Ascending aorta (tissue), 2 donors: ENCODE measurements at regions of chr2 and their contacts with region 1.

Region 1: GRCh38 chr2:218395797-218396687 is 3.6 kb upstream of the CTDSP1 start:
- DNase-seq: peak; percentile 70 to 96
- H3K4me3 ChIP-seq: peak overlapping the region; percentile 79 to 99
- H3K27ac ChIP-seq: peak overlapping the region; percentile 98
- H3K4me1 ChIP-seq: peaks cover 0 to 9% of the 10 kb centered on the region in 2 donors
- H3K27me3 ChIP-seq: no peaks in the 10 kb centered on the region
- CTCF ChIP-seq: peak; percentile 88 to 98 (median 97)

Region 2: GRCh38 chr2:218186355-218186766 is 209.7 kb before region 1 on chr2:
- intact Hi-C with region 1: loop called (anchors 1 kb)
- DNase-seq: peak in 1 of 2 donors; percentile 81
- H3K4me3 ChIP-seq: no peak overlapping the region
- H3K27ac ChIP-seq: no peak overlapping the region
- H3K4me1 ChIP-seq: peaks cover 0 to 6% of the 10 kb centered on the region in 2 donors
- H3K27me3 ChIP-seq: no peaks in the 10 kb centered on the region
- CTCF ChIP-seq: peak; percentile 69 to 89 (median 83)

Region 3: DNA sequence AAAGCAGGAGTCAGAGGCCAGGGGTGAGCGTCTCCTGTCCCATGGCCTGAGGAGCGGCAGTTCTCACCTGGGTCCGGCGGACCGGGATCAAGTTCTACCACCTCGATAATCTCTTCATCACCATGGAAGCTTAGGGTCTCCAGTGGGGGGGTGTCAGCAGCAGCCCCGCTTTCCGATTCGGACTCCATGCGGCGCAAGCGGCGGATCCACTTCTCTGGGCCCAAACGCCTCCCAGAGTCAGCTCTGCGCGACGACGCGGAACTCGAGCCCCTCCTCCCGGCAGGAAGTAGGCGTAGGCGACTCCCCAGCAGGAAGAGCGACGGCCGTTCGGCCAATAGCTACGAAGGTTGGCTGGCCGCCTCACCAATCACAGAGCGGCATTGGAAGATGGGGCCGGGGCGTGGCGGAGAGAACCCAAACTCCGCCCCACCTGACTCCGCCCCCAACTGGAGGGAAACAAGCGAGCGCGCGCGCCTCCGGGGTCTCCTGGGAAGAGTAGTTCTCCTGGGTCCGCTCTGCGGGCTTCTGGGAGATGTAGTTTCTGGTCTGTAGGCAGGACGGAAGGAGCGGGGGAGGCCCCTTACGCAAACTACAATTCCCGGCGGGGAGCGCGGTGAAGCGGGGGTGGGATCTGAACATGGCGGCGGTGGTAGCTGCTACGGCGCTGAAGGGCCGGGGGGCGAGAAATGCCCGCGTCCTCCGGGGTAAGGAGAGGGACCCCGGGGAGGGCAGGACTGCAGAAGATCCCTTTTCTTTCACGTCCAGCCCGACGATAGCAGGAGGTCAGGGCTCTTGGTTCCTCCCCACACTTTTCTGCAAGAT is 125.9 kb before region 1 on chr2 and contains the starts of genes AAMP and PNKD:
- intact Hi-C with region 1: loop called (anchors 1 kb)
- DNase-seq: peak; percentile 99 to 100
- H3K4me3 ChIP-seq: peak within 1 kb of the TSS; percentile 79 to 85
- H3K27ac ChIP-seq: peak within 1 kb of the TSS; percentile 73 to 80
- H3K4me1 ChIP-seq: peaks cover 12 to 35% of the 10 kb centered on the region in 2 donors
- H3K27me3 ChIP-seq: no peaks in the 10 kb centered on the region
- CTCF ChIP-seq: peak in 1 of 3 experiments; percentile 44
- total RNA-seq, gene AAMP: 73.7 TPM
- total RNA-seq, gene PNKD: 45.8 TPM

Region 4: GRCh38 chr2:218292048-218293014 is 103.7 kb before region 1 on chr2 and contains the start of gene TMBIM1:
- intact Hi-C with region 1: loop called (anchors 2 kb)
- DNase-seq: peak; percentile 44 to 94
- H3K4me3 ChIP-seq: peak within 1 kb of the TSS; percentile 73 to 88
- H3K27ac ChIP-seq: peak within 1 kb of the TSS; percentile 98 to 99
- H3K4me1 ChIP-seq: peaks cover 28 to 73% of the 10 kb centered on the region in 2 donors
- H3K27me3 ChIP-seq: no peaks in the 10 kb centered on the region
- CTCF ChIP-seq: peak; percentile 53 to 97 (median 53)
- total RNA-seq, gene TMBIM1: 320 TPM

Region 5: DNA sequence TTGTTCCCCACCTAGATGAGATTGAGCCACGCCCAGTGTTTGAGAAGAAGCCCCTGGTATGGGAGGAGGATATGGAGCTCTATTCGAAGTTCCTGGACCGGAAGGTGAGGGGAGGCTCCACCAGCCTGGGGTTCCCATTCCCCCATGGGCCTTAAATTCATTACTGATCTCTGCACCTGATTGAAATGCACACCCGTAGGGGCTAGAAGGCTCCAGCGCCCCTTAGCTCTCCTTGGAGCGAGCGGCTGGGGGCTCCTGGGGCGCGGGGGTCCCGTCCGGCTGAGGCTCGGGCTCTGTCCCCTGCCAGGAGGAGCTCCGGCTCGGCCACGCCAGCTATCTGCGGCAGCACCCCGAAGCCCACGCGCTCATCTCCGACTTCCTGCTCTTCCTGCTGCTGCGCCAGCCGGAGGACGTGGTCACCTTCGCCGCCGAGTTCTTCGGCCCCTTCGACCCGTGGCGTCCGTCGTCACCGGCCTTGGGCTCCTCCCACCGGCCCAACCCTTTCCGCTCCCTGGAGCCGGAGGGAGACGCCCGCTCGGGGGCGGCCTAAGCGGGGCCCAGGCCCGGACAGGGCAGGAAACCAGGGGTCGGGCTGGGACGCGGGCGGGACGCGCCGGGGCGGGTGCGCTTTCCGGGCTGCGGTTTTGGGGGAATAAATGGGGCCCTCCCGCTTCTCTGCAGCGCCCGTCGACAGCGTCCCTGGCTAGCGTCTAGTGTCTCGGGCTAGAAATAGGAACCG is 28.5 kb before region 1 on chr2:
- intact Hi-C with region 1: loop called (anchors 2 kb)
- DNase-seq: peak; percentile 77 to 94
- H3K4me3 ChIP-seq: peak overlapping the region; percentile 53 to 64
- H3K27ac ChIP-seq: peak overlapping the region; percentile 79 to 95
- H3K4me1 ChIP-seq: peaks cover 0 to 16% of the 10 kb centered on the region in 2 donors
- H3K27me3 ChIP-seq: no peaks in the 10 kb centered on the region
- CTCF ChIP-seq: no peak

Region 6: DNA sequence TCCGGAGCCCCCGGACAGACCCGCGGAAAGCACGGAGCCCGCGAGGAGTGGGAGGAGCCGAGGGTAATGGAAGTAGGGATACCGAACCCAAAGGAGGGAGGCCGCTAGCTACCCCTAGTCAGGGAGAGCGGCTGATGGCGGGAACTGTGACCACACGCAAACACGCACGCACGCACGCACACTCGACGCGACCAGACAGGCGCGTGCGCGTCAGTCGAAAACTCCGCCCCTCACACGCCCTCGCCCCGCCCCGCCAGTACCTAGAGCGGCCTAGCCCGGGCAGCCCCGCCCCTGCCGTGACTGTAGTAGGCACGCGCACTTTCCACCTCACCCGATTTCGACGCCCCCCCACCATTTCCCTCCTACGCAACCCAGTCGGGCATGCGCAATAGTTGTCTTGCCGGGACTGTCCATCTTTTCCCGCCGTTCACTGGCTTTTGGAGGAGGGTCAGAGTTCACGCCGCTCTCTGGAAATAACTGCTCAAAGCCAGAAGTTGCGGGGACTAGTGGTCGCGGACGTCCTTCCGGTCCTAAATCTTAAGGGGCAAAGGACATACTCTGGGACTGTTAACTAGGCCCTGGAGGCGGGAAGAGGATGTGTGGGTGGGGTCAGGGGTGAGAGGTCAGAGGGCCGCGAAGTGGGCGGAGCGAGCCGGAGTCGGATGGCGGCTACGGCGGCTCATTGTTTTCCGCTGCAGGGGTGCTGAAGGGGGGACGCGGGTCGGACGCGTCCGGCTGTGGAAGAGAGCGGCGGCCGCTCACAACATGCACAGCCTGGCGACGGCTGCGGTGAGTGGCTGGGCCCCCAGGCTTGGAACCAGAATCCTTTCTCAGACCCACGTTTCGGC is 172.4 kb after region 1 on chr2 and contains the starts of genes CNOT9 and USP37:
- intact Hi-C with region 1: loop called (anchors 1 kb)
- DNase-seq: peak; percentile 96 to 100
- H3K4me3 ChIP-seq: peak within 1 kb of the TSS; percentile 75 to 89
- H3K27ac ChIP-seq: peak within 1 kb of the TSS; percentile 91 to 95
- H3K4me1 ChIP-seq: peaks cover 5 to 26% of the 10 kb centered on the region in 2 donors
- H3K27me3 ChIP-seq: no peaks in the 10 kb centered on the region
- CTCF ChIP-seq: no peak
- total RNA-seq, gene CNOT9: 46.7 TPM
- total RNA-seq, gene USP37: 11.8 TPM